ENCODE measurements at regions of chrX and their contacts with region 1.

Region 1: DNA sequence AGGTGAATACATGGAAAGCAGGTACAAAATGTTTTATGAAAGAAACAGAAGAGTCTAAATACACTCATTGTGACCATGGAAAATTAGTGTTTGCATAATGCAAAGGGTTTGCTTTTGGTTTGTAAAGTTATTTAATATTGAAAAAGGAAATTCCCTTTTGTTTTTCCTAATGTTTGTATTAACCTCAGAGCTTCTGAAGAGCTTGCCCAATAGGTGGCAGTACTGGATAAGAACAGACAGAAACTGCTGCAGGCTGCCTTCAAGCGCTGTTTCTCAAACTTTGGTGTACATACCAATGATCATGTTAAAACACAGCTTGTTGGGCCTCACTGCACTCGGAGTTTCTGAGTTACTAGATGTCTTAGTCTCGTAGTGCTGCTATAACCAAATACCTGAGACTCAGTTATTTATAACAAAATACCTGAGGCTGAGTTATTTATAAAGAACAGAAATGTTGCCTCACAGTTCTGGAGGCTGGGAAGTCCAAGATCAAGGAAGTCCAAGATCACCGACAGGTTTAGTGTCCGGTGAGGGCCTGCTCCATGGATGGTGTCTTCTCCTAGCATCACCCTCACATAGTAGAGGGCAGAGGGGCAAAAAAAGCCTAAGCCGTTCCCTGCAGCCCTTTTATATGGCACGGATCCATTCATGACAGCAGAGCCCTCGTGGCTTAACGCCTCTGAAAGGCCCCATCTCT is 54.2 kb downstream of the SUPT20HL2 start:
- DNase-seq: peak; percentile 5
- H3K4me3 Mint-ChIP-seq: no peak overlapping the region
- H3K27ac Mint-ChIP-seq: peak overlapping the region; percentile 44
- H3K4me1 Mint-ChIP-seq: peaks cover 27% of the 10 kb centered on the region
- H3K27me3 Mint-ChIP-seq: no peaks in the 10 kb centered on the region

Region 2: GRCh38 chrX:24294620-24295019 is 34.9 kb after region 1 on chrX:
- intact Hi-C with region 1: loop called (anchors 1 kb)
- DNase-seq: peak; percentile 2
- H3K4me3 Mint-ChIP-seq: no peak overlapping the region
- H3K27ac Mint-ChIP-seq: no peak overlapping the region
- H3K4me1 Mint-ChIP-seq: no peaks in the 10 kb centered on the region
- H3K27me3 Mint-ChIP-seq: no peaks in the 10 kb centered on the region

Region 3: GRCh38 chrX:25144043-25144940 is 884.6 kb after region 1 on chrX:
- intact Hi-C with region 1: loop called (anchors 10 kb)
- DNase-seq: no peak
- H3K4me3 Mint-ChIP-seq: no peak overlapping the region
- H3K27ac Mint-ChIP-seq: no peak overlapping the region
- H3K4me1 Mint-ChIP-seq: no peaks in the 10 kb centered on the region
- H3K27me3 Mint-ChIP-seq: peaks cover 13% of the 10 kb centered on the region